Activated CD8-positive, alpha-beta T cell treated with anti-CD3 and anti-CD28 coated beads, Interleukin-2, amount 10 ng/mL, durations not matched to agents 7 days and 5 days (primary cell): ENCODE measurements at regions of chr5 and their contacts with region 1.

Region 1: DNA sequence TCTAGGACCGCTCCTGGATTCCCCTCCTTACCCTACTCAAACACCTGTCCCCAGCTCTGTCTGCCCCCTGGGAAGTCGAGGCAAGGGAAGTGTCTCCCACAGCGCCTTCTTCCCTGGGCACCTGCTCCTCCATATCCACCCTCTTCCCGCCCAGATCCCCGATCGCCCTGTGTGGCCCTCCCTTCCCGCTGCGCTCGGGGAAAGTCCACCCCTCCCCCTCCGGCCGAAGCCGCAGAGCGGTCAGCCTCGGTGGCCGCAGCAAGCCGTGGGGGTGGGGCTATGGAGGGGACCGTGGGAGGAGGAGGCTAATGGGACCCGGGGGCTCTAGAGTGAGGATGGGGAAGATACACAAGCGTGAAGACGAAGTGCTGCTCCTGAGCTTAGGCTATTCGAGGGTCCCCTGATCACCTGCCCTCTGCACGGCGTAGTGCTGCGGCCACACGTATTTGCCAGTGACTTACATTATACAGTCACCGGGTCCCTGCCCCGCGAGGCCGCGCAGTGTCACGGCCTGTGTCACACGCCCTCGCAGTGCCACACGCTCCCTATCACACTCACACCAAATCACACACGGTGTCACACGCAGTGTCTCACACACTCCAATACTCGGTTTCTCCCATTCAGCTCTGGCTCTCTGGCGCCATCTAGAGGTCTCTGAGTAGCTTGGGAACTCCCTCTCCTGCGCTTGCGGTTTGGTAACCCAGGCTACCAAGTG is 658 bp upstream of the PCDH1 start:
- DNase-seq: peak; percentile 92
- ATAC-seq: peak; percentile 88
- H3K4me3 Mint-ChIP-seq: peak overlapping the region; percentile 30
- H3K27ac Mint-ChIP-seq: no peak overlapping the region
- H3K4me1 Mint-ChIP-seq: peaks cover 24% of the 10 kb centered on the region
- H3K27me3 Mint-ChIP-seq: peaks cover 79% of the 10 kb centered on the region

Region 2: GRCh38 chr5:141681695-141682641 is 196.9 kb before region 1 on chr5 and contains the start of gene ARAP3:
- CTCF ChIA-PET with region 1: interaction called, 17 read pairs
- POLR2A ChIA-PET with region 1: no interaction called
- DNase-seq: peak; percentile 54
- ATAC-seq: peak; percentile 86
- H3K4me3 Mint-ChIP-seq: peak within 1 kb of the TSS; percentile 79
- H3K27ac Mint-ChIP-seq: peak within 1 kb of the TSS; percentile 82
- H3K4me1 Mint-ChIP-seq: peaks cover 38% of the 10 kb centered on the region
- H3K27me3 Mint-ChIP-seq: peaks cover 3% of the 10 kb centered on the region
- total RNA-seq, gene ARAP3: 8.5 to 8.8 TPM

Region 3: GRCh38 chr5:141701360-141702119 is 177.3 kb before region 1 on chr5:
- CTCF ChIA-PET with region 1: interaction called, 148 read pairs
- POLR2A ChIA-PET with region 1: interaction called, 3 read pairs
- DNase-seq: no peak
- ATAC-seq: peak; percentile 25
- H3K4me3 Mint-ChIP-seq: peak overlapping the region; percentile 71
- H3K27ac Mint-ChIP-seq: no peak overlapping the region
- H3K4me1 Mint-ChIP-seq: peaks cover 17% of the 10 kb centered on the region
- H3K27me3 Mint-ChIP-seq: peaks cover 46% of the 10 kb centered on the region

Region 4: DNA sequence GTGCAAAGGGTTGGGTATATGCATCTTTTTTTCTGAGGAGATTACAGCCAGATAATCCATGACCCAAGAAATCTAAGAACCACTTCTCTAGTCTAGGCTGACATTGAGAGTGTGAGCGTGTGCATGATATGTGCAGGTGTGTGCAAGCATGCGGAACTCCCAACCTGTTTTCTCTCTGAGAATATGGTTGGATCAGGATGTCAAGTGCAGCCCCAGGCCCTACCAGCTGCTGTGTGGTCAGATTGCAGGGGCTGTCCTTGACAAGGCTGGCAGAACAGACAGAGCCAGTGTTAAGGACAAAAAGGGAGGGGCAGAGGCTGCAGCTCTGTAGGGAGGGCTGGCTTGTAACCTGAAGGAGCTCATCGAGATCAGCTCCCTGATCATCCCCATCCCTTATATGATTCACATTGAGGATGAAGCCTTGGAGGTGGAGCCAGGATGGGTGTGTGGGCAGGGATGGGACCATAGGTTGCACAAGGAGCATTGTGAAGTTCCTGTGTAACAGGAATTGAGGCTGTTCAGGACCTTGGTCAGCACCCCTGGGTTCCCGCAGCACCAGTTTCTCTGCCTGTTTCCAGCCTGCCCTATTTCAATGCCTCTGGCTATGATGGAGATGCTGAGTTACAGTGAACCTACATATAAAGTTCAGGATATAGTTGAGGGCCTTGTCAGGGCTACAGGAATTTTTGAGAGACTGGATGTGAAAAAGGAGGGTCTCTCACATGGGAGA is 144.2 kb before region 1 on chr5:
- CTCF ChIA-PET with region 1: no interaction called
- POLR2A ChIA-PET with region 1: no interaction called
- DNase-seq: peak; percentile 72
- ATAC-seq: peak; percentile 67
- H3K4me3 Mint-ChIP-seq: no peak overlapping the region
- H3K27ac Mint-ChIP-seq: no peak overlapping the region
- H3K4me1 Mint-ChIP-seq: peaks cover 4% of the 10 kb centered on the region
- H3K27me3 Mint-ChIP-seq: no peaks in the 10 kb centered on the region

Region 5: GRCh38 chr5:141821361-141821925 is 57.4 kb before region 1 on chr5:
- CTCF ChIA-PET with region 1: interaction called, 12 read pairs
- POLR2A ChIA-PET with region 1: no interaction called
- DNase-seq: no peak
- ATAC-seq: no peak
- H3K4me3 Mint-ChIP-seq: no peak overlapping the region
- H3K27ac Mint-ChIP-seq: no peak overlapping the region
- H3K4me1 Mint-ChIP-seq: peaks cover under 1% of the 10 kb centered on the region
- H3K27me3 Mint-ChIP-seq: peaks cover 11% of the 10 kb centered on the region

Region 6: GRCh38 chr5:141866149-141867120 is 12.4 kb before region 1 on chr5:
- CTCF ChIA-PET with region 1: interaction called, 20 read pairs
- POLR2A ChIA-PET with region 1: no interaction called
- DNase-seq: no peak
- ATAC-seq: no peak
- H3K4me3 Mint-ChIP-seq: no peak overlapping the region
- H3K27ac Mint-ChIP-seq: no peak overlapping the region
- H3K4me1 Mint-ChIP-seq: no peaks in the 10 kb centered on the region
- H3K27me3 Mint-ChIP-seq: peaks cover 14% of the 10 kb centered on the region

Region 7: DNA sequence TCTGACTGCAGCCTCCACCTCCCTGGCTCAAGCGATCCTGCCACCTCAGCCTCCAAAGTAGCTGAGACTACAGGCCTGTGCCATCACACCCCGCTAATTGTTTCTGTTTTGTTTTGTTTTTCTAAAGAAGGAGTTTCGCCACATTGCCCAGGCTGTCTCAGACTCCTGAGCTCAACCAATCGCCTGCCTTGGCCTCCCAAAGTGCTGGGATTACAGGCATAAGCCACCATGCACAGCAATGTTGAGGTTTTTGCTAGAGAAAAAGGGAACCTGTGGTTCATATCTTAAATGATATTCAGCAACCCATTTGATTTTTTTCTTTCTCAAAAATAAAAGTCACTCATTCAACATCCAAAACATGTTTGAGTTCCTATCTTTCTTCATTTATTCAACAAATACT is 24.4 kb after region 1 on chr5:
- CTCF ChIA-PET with region 1: no interaction called
- POLR2A ChIA-PET with region 1: no interaction called
- DNase-seq: no peak
- ATAC-seq: no peak
- H3K4me3 Mint-ChIP-seq: no peak overlapping the region
- H3K27ac Mint-ChIP-seq: no peak overlapping the region
- H3K4me1 Mint-ChIP-seq: no peaks in the 10 kb centered on the region
- H3K27me3 Mint-ChIP-seq: peaks cover 25% of the 10 kb centered on the region

Region 8: GRCh38 chr5:141914199-141914743 is 35.4 kb after region 1 on chr5:
- CTCF ChIA-PET with region 1: interaction called, 10 read pairs
- POLR2A ChIA-PET with region 1: no interaction called
- DNase-seq: no peak
- ATAC-seq: peak; percentile 88
- H3K4me3 Mint-ChIP-seq: peak overlapping the region; percentile 14
- H3K27ac Mint-ChIP-seq: no peak overlapping the region
- H3K4me1 Mint-ChIP-seq: peaks cover 8% of the 10 kb centered on the region
- H3K27me3 Mint-ChIP-seq: peaks cover 47% of the 10 kb centered on the region

Region 9: GRCh38 chr5:141968914-141969608 is 90.2 kb after region 1 on chr5 and contains the start of gene RNF14:
- CTCF ChIA-PET with region 1: interaction called, 16 read pairs
- POLR2A ChIA-PET with region 1: interaction called, 5 read pairs
- DNase-seq: peak; percentile 96
- ATAC-seq: peak; percentile 98
- H3K4me3 Mint-ChIP-seq: peak within 1 kb of the TSS; percentile 92
- H3K27ac Mint-ChIP-seq: peak within 1 kb of the TSS; percentile 95
- H3K4me1 Mint-ChIP-seq: peaks cover 33% of the 10 kb centered on the region
- H3K27me3 Mint-ChIP-seq: no peaks in the 10 kb centered on the region
- total RNA-seq, gene RNF14: 22.2 to 26.0 TPM

Region 10: DNA sequence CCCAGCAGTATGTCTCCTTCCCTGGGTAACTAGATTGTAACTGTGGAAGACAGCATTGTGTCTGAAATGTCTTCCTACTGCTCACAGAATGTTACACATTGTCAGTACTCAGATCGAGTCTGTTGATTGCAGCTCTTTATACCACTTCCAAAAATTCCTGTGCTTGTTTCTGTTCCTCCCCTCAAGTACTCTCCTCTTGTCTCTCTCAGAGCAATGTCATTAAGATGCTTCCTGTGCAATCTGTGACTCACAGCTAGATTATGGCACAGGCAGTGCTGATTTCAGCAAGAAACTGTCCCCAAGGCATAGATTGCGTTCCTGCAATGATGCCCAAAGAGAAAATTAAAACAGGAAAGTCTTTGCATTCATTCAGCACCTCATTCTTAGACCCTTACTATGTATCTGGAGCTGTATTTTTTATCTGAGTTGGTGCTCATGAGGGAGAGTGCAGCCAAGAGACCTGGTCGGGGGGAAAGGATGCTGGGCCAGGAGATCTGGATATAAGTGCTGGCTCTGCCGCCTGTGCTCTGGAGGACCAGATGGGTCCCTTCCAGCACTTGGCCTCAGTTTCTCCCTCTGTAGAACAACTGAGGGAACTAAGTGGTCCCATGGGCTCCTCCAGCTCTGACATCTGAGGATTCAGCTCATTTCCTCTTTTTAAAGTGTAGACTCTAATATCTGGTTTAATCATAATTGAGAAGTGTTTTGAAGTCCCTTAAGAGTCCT is 174.7 kb after region 1 on chr5:
- CTCF ChIA-PET with region 1: no interaction called
- POLR2A ChIA-PET with region 1: no interaction called
- DNase-seq: no peak
- ATAC-seq: no peak
- H3K4me3 Mint-ChIP-seq: no peak overlapping the region
- H3K27ac Mint-ChIP-seq: no peak overlapping the region
- H3K4me1 Mint-ChIP-seq: peaks cover 4% of the 10 kb centered on the region
- H3K27me3 Mint-ChIP-seq: no peaks in the 10 kb centered on the region